ENCODE measurements at regions of chr6 and their contacts with region 1.

Region 1: DNA sequence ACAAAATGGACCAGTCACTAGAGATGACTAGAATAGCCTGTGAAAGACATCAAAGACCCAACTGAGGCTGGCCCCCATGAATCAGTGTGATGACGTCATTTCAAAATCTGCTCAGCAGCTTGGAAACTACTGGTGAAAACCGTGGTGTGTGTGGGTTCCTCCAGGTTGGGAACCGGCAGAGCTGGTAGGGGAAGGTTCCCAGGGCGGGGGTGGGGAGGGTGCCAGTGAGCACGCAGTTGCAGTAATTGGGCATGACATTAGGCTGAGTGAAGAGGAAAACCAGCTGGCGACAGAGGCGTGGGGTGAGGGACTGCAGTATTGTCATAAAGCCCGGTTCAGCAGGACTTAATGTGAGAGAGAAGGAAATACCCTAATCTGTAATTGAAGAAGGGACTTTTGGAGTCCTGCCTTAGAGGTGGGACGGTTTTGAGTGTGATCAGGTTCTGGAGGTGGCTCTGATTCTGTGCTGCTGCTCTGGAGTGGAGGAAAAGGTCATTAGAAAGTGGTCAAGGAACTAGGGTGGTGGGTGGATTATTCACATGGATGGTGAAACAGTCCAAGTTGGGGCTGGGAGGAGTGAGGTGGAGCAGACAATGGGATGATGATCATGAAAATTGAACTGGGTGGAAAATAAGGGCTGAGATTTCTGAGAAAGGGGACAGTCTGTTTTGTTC is 52.0 kb upstream of the MTHFD1L start:
- DNase-seq: peak; percentile 28
- H3K4me3 ChIP-seq: no peak overlapping the region
- H3K27ac ChIP-seq: no peak overlapping the region
- H3K4me1 ChIP-seq: no peaks in the 10 kb centered on the region
- H3K27me3 ChIP-seq: no peaks in the 10 kb centered on the region
- CTCF ChIP-seq: no peak

Region 2: GRCh38 chr6:150079604-150080003 is 733.9 kb before region 1 on chr6:
- intact Hi-C with region 1: loop called (anchors 5 kb)
- DNase-seq: no peak
- H3K4me3 ChIP-seq: no peak overlapping the region
- H3K27ac ChIP-seq: no peak overlapping the region
- H3K4me1 ChIP-seq: no peaks in the 10 kb centered on the region
- H3K27me3 ChIP-seq: no peaks in the 10 kb centered on the region
- CTCF ChIP-seq: no peak

Region 3: GRCh38 chr6:150417899-150418826 is 395.3 kb before region 1 on chr6:
- intact Hi-C with region 1: loop called (anchors 2 kb)
- DNase-seq: peak; percentile 50
- H3K4me3 ChIP-seq: peak overlapping the region; percentile 4
- H3K27ac ChIP-seq: peak overlapping the region; percentile 38
- H3K4me1 ChIP-seq: no peaks in the 10 kb centered on the region
- H3K27me3 ChIP-seq: no peaks in the 10 kb centered on the region
- CTCF ChIP-seq: peak; percentile 62

Region 4: DNA sequence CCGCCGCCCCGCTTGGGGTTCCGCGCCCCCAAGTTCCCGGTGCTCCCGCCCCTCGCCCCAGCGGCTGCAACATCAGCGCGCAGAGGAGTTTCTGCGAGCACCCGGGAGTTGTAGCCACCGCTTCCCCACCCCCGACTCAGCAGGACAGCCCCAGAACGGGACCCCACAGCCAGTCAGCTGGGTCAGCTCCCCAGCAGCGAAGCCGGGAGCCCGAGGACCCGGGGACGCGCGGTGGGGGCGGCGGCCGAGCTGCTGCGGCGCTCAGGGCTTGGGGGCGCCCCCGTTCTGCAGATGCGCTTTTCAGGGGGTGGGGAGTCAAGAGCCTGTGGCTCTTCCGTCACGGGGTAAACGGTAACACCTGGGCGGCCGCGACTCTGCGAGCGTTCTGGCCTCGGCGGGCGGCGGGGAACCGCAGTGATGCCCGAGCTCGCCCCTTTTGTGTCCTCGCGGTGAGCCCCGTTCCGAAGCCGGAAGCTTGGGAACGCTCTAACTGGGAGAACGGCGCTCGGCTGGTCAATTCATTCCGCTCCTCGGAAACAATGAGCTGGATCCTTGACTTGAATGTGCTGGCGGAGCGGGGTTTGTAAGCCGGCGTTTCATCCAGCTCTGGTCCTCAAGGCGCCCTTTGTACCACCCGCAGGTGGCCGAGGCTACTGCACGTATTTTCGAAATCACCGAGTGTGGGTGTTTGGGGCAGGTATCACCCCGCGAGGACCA is 213.0 kb before region 1 on chr6:
- intact Hi-C with region 1: loop called (anchors 5 kb)
- DNase-seq: peak; percentile 82
- H3K4me3 ChIP-seq: peak overlapping the region; percentile 78
- H3K27ac ChIP-seq: peak overlapping the region; percentile 91
- H3K4me1 ChIP-seq: peaks cover 4% of the 10 kb centered on the region
- H3K27me3 ChIP-seq: no peaks in the 10 kb centered on the region
- CTCF ChIP-seq: peak; percentile 43

Region 5: GRCh38 chr6:150876598-150876997 is 63.1 kb after region 1 on chr6:
- intact Hi-C with region 1: loop called (anchors 5 kb)
- DNase-seq: peak; percentile 27
- H3K4me3 ChIP-seq: no peak overlapping the region
- H3K27ac ChIP-seq: no peak overlapping the region
- H3K4me1 ChIP-seq: no peaks in the 10 kb centered on the region
- H3K27me3 ChIP-seq: no peaks in the 10 kb centered on the region
- CTCF ChIP-seq: no peak

Measured in colonic mucosa (tissue), 4 donors.